CD8-positive, alpha-beta T cell (primary cell): ENCODE measurements at regions of chr9 and their contacts with region 1.

Region 1: DNA sequence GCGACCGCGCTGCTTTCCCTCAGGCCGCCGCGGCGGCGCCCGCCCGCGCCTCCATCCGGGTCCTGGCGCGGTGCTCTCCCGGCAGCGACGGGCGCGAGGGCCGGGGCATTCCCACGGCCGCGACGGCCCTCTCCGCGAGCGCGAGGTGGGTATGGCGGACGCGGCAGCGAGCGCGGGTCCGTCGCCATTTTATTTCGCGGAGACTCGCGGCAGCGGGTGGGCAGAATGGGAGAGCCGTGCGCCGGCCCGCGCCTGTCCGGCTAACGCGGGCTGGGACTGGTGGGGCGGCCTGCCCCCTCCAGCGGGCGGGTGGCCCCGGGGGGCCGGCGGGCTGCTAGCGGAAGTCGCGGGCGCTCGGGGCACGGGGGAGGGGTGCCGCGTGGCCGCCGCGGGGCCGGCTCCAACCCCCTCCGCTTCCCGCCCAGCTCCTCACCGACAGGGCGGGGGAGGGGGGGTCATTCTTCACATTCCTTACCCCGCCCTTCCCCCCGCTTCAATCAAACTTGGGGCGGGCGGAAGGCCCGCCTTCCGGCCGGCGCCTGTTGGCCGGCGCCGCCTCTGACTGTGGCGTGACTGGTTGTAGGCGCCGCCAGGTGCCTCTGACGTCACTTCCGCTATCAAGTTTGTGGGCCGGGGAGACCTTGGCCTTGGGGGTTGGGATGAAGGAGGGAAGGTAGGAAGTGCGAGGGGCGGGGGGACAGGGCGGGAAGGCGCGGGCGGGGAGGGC is 82.1 kb downstream of the PTPDC1 start:
- DNase-seq: peak; percentile 88 to 98 (median 93)
- ATAC-seq: peak; percentile 60
- H3K4me3 ChIP-seq: peak overlapping the region; percentile 52 to 89
- H3K4me3 Mint-ChIP-seq: peak overlapping the region; percentile 90
- H3K27ac ChIP-seq: peak overlapping the region; percentile 89 to 92
- H3K27ac Mint-ChIP-seq: peak overlapping the region; percentile 93
- H3K4me1 ChIP-seq: peaks cover 51% of the 10 kb centered on the region
- H3K4me1 Mint-ChIP-seq: peaks cover 55% of the 10 kb centered on the region
- H3K27me3 ChIP-seq: no peaks in the 10 kb centered on the region
- H3K27me3 Mint-ChIP-seq: no peaks in the 10 kb centered on the region
- CTCF ChIP-seq: no peak

Region 2: GRCh38 chr9:92669890-92670708 is 1496.3 kb before region 1 on chr9 and contains the start of gene IPPK:
- CTCF ChIA-PET with region 1: no interaction called
- POLR2A ChIA-PET with region 1: no interaction called
- intact Hi-C with region 1: loop called in 1 of 2 experiments (anchors 10 kb)
- DNase-seq: peak; percentile 93 to 99 (median 96)
- ATAC-seq: peak; percentile 93
- H3K4me3 ChIP-seq: peak within 1 kb of the TSS; percentile 87 to 98
- H3K4me3 Mint-ChIP-seq: peak within 1 kb of the TSS; percentile 96
- H3K27ac ChIP-seq: peak within 1 kb of the TSS; percentile 96
- H3K27ac Mint-ChIP-seq: peak within 1 kb of the TSS; percentile 98
- H3K4me1 ChIP-seq: peaks cover 23% of the 10 kb centered on the region
- H3K4me1 Mint-ChIP-seq: peaks cover 39% of the 10 kb centered on the region
- H3K27me3 ChIP-seq: no peaks in the 10 kb centered on the region
- H3K27me3 Mint-ChIP-seq: no peaks in the 10 kb centered on the region
- CTCF ChIP-seq: no peak
- total RNA-seq, gene IPPK: 12.2 to 12.8 TPM

Region 3: DNA sequence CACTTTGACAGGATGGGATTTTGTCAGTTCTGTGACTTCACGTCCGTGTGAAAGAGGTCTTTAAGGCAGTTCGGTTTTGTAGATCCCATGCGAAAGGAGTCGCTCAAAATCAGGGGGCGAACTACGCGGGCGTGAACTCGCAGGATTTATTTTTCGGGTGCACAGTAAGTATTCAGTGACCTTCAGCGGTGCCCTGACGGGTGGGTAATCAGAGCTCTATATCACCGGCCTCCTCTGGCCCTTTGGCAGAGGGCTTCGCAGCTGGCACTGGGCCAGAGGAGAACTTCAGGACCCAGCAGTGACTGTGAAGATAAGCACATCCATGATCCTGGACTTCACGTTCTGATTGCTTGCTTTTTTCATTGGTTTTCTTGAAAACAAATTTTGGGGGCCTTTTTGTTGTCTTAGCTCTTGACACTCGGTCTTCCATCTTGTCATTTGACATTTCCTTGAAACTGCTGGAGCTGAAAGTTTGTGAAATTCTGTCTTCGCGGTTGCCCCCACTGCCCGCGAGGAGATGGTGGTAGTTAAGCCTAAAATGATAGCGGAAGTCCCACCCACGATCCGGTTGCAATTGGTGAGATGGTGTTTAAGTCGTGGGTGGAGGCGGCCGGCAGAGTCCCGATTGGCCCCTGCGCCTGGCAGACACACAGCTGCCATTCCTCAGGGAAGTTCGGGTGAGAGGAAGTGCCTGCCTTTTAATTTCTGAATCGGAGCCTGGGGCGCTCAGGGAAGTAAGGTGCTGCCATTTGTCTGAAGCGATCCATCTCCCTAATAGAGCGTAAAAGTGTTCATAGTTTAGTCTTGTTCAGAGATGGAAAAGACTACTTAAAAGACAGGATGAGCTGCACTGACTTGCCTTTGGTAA is 713.1 kb before region 1 on chr9 and contains the start of gene FAM120AOS:
- CTCF ChIA-PET with region 1: no interaction called
- POLR2A ChIA-PET with region 1: no interaction called
- intact Hi-C with region 1: loop called (anchors 5 kb)
- DNase-seq: peak; percentile 59 to 95 (median 85)
- ATAC-seq: peak; percentile 74
- H3K4me3 ChIP-seq: peak within 1 kb of the TSS; percentile 63 to 88
- H3K4me3 Mint-ChIP-seq: peak within 1 kb of the TSS; percentile 90
- H3K27ac ChIP-seq: peak within 1 kb of the TSS; percentile 49 to 68
- H3K27ac Mint-ChIP-seq: peak within 1 kb of the TSS; percentile 95
- H3K4me1 ChIP-seq: peaks cover 27% of the 10 kb centered on the region
- H3K4me1 Mint-ChIP-seq: peaks cover 60% of the 10 kb centered on the region
- H3K27me3 ChIP-seq: no peaks in the 10 kb centered on the region
- H3K27me3 Mint-ChIP-seq: no peaks in the 10 kb centered on the region
- CTCF ChIP-seq: no peak
- total RNA-seq, gene FAM120AOS: 40.3 to 40.7 TPM

Region 4: DNA sequence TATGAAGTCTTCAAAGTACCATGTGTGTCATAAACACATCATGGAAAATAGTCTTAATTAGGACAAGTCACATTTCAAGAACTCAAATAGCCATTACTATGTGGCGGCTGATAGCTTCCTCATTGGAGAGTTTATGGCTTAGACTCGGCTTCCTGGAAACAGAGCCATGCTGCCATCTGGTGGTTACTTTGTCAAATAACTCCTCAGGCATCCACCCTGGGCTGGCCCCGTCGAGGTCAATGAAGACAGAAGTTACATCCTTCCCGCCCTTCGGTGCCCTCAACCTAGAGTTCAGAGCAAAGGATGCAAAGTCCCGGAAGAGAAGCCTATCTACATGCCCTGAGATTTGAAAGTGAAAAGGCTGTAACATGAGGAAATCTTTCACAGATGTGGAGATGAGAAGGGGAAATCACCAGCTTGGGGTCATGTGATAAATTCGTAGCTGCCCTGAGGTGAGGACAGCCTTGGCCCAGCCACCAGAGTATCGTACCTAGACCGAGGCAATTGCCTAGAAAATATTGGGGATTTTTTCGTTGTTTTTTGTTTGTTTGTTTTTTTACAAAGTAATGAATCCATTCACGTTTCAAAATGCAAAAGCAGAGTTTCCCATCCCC is 47.2 kb after region 1 on chr9:
- CTCF ChIA-PET with region 1: interaction called, 5 read pairs
- POLR2A ChIA-PET with region 1: no interaction called
- intact Hi-C with region 1: loop called in 1 of 2 experiments (anchors 2 kb)
- DNase-seq: peak; percentile 35 to 87 (median 69)
- ATAC-seq: peak; percentile 75
- H3K4me3 ChIP-seq: no peak overlapping the region
- H3K4me3 Mint-ChIP-seq: no peak overlapping the region
- H3K27ac ChIP-seq: no peak overlapping the region
- H3K27ac Mint-ChIP-seq: no peak overlapping the region
- H3K4me1 ChIP-seq: peaks cover 3% of the 10 kb centered on the region
- H3K4me1 Mint-ChIP-seq: peaks cover 4% of the 10 kb centered on the region
- H3K27me3 ChIP-seq: no peaks in the 10 kb centered on the region
- H3K27me3 Mint-ChIP-seq: peaks cover 35% of the 10 kb centered on the region
- CTCF ChIP-seq: peak; percentile 86

Region 5: GRCh38 chr9:94726495-94727191 is 560.2 kb after region 1 on chr9 and contains the start of gene AOPEP:
- CTCF ChIA-PET with region 1: no interaction called
- POLR2A ChIA-PET with region 1: no interaction called
- intact Hi-C with region 1: loop called (anchors 5 kb)
- DNase-seq: peak; percentile 98 to 100 (median 99)
- ATAC-seq: peak; percentile 95
- H3K4me3 ChIP-seq: peak within 1 kb of the TSS; percentile 88 to 92
- H3K4me3 Mint-ChIP-seq: peak within 1 kb of the TSS; percentile 99
- H3K27ac ChIP-seq: peak within 1 kb of the TSS; percentile 95 to 96
- H3K27ac Mint-ChIP-seq: peak within 1 kb of the TSS; percentile 98
- H3K4me1 ChIP-seq: peaks cover 6% of the 10 kb centered on the region
- H3K4me1 Mint-ChIP-seq: peaks cover 12% of the 10 kb centered on the region
- H3K27me3 ChIP-seq: no peaks in the 10 kb centered on the region
- H3K27me3 Mint-ChIP-seq: no peaks in the 10 kb centered on the region
- CTCF ChIP-seq: no peak
- total RNA-seq, gene AOPEP: 4.5 to 5.2 TPM